T-cell (primary cell): ENCODE measurements at regions of chr3 and their contacts with region 1.

Region 1: DNA sequence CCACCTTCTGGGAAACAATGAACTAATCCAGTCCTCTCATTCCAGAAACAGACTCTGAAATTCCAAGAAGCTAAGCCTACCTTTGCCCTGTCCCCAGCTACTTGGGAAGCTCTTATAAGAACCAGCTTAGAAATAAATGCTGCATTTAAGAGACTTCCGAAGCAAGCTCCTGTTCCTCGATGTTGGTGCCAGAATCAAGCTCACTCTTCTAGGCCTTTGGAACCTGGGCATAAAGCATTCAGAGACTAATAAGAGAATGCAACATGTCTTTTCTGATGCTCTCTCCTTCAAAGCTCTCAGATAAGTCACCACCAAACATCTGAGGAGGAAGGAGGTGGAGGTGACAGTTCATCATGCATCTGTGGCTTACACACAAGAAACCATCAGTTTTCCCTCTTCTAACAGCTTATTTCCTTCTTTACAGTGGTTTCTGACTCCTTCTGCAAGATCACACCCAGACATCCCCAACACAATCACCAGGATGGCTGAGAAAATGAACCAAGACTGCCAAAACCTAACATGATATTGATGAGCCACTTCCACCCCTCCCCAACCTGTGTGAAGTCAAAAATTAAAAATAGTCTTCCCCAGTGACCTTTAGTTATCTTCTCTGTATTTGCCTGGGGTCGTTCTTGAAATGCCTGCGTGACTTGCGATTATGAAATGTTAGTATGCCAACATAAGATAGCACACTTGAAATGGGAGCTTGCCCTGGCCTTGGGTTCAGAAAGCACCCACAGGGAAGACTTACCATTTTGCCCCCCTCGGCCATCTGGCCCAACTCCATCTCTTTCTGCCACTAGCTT is 11.5 kb downstream of the ARHGEF3 start:
- DNase-seq: peak in 14 of 35 experiments; percentile 9 to 69 (median 28)
- ATAC-seq: peak; percentile 63 to 79 (median 72)
- H3K4me3 ChIP-seq: peak overlapping the region in 1 of 2 donors; percentile 26
- H3K4me3 Mint-ChIP-seq: peak overlapping the region; percentile 17 to 70 (median 52)
- H3K27ac ChIP-seq: peak overlapping the region; percentile 86
- H3K27ac Mint-ChIP-seq: peak overlapping the region; percentile 97 to 99
- H3K4me1 ChIP-seq: peaks cover 70 to 87% of the 10 kb centered on the region in 2 experiments
- H3K4me1 Mint-ChIP-seq: peaks cover 90 to 95% (median 94%) of the 10 kb centered on the region in 3 donors
- H3K27me3 ChIP-seq: no peaks in the 10 kb centered on the region
- H3K27me3 Mint-ChIP-seq: no peaks in the 10 kb centered on the region

Region 2: DNA sequence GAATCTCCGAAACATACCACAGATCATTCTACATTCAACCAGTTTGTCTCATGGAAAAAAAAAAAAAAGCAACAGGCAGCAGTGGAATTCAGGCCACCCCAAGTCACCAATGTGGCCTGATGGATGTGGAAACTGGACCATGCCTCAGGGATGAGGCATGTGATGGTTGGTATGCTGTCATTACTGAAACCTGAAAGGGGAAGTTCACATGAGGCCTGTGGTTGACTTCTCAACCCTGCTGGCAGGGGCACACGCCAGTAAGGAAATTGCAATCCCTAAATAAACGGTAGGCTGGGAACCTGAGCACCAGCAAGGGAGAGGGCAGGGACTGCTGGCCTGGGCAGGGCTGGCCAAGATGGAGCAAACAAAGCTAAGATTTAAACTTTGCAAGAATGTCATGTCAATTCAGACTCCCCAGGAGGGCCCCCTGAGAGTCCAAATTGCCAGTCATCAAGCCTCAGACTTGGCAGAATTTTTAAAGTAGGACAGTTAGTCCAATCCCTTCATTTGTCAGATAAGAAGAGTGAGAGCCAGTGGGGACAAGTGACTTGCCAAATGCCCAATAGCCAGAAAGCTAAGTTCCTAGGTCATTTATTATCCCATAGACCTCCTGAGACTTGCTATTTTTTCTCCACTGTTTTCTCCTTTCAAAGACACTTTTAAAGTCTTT is 632.4 kb before region 1 on chr3:
- CTCF ChIA-PET with region 1: no interaction called
- POLR2A ChIA-PET with region 1: no interaction called
- DNase-seq: peak in 1 of 35 experiments; percentile 3
- ATAC-seq: no peak
- H3K4me3 ChIP-seq: no peak overlapping the region
- H3K4me3 Mint-ChIP-seq: no peak overlapping the region
- H3K27ac ChIP-seq: no peak overlapping the region
- H3K27ac Mint-ChIP-seq: no peak overlapping the region
- H3K4me1 ChIP-seq: no peaks in the 10 kb centered on the region
- H3K4me1 Mint-ChIP-seq: no peaks in the 10 kb centered on the region
- H3K27me3 ChIP-seq: no peaks in the 10 kb centered on the region
- H3K27me3 Mint-ChIP-seq: peaks cover 0 to 3% of the 10 kb centered on the region in 2 donors

Region 3: DNA sequence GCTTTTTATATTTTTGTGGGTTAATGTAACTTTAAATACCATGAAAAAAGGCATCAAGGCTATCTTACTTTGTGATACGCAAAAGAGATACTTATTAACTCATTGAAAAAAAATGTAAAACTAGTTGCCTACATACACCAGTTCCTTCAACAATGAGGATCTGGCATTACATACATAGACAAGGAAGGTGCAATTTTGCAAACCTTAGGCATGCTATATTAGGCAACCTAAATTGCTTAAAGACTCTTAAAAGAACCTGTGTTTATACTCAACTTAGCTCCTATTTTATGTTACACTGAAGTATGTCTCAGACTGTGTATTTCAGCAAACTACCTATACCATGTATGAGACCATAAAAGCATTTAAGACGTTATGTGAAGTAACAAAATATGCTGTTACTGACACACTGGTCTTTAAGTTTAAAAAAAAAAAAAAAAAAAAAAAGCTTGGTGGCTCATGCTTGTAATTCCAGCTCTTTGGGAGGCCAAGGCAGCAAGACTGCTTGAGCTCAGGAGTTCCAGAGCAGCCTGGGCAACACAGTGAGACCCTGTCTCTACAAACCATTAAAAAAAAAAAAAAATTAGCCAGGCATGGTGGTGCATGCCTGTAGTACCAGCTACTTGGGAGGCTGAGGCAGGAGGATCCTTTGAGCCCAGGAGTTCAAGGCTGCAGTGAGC is 116.3 kb before region 1 on chr3:
- CTCF ChIA-PET with region 1: no interaction called
- POLR2A ChIA-PET with region 1: interaction called in 1 of 2 experiments, 11 read pairs
- DNase-seq: no peak
- ATAC-seq: no peak
- H3K4me3 ChIP-seq: no peak overlapping the region
- H3K4me3 Mint-ChIP-seq: no peak overlapping the region
- H3K27ac ChIP-seq: no peak overlapping the region
- H3K27ac Mint-ChIP-seq: no peak overlapping the region
- H3K4me1 ChIP-seq: peaks cover 0 to 12% of the 10 kb centered on the region in 2 experiments
- H3K4me1 Mint-ChIP-seq: peaks cover 42 to 53% (median 51%) of the 10 kb centered on the region in 3 donors
- H3K27me3 ChIP-seq: no peaks in the 10 kb centered on the region
- H3K27me3 Mint-ChIP-seq: no peaks in the 10 kb centered on the region